Panc1 (cell line): ENCODE measurements at regions of chr12 and their contacts with region 1.

Region 1: DNA sequence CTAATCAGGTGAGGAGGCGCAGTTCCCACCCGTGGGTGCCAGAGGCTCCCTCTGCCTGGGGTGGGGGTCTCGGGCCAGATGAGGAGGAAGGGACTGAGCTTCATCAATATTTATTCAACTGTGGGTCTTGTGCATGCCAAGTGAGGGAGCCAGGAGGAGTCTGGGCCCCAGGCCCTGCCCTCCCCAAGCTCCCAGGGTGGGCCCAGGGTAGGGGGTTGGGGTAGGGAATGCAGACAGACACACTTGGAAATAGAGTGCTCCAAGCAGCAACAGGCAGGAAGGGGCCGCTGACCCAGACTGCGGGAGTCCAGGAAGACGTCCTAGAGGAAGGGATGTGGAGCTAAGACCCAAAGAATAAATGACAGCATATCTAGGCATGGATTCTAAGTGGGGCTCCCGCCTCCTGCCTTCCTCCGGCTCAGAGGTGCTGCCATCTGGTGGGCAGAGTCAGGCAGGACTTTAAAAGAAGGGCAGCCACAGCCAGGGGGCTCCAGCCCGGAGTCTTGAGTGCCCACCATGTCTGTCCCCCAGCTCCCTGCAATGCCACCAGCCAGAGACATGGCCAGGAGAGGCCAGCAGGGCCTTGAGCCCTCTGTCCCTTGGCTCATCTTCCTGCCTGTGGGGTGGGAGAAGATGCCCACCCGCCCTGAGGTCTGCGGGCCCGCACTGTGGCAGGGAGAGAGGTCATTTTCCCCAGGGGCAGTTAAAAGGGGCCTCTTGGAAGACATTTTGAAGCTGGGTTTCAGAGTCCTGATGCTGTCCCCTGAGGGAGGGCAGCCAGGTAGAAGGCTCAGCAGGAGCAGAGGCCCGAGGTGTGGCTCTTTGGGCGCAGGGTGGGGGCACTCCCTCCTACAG is 70.1 kb downstream of the PHETA1 start:
- DNase-seq: no peak
- ATAC-seq: peak; percentile 87
- H3K4me3 ChIP-seq: no peak overlapping the region
- H3K27ac ChIP-seq: no peak overlapping the region
- H3K4me1 ChIP-seq: no peaks in the 10 kb centered on the region
- H3K27me3 ChIP-seq: peaks cover 6% of the 10 kb centered on the region; the same call in 1 of the 2 replicates
- CTCF ChIP-seq: peak; percentile 95

Region 2: GRCh38 chr12:110813285-110813684 is 485.5 kb before region 1 on chr12:
- CTCF ChIA-PET with region 1: no interaction called
- POLR2A ChIA-PET with region 1: no interaction called
- in situ Hi-C with region 1: no loop called
- intact Hi-C with region 1: no loop called
- DNase-seq: no peak
- ATAC-seq: no peak
- H3K4me3 ChIP-seq: no peak overlapping the region
- H3K27ac ChIP-seq: no peak overlapping the region
- H3K4me1 ChIP-seq: no peaks in the 10 kb centered on the region
- H3K27me3 ChIP-seq: peaks cover 3% of the 10 kb centered on the region; the same call in 1 of the 2 replicates
- CTCF ChIP-seq: no peak

Region 3: DNA sequence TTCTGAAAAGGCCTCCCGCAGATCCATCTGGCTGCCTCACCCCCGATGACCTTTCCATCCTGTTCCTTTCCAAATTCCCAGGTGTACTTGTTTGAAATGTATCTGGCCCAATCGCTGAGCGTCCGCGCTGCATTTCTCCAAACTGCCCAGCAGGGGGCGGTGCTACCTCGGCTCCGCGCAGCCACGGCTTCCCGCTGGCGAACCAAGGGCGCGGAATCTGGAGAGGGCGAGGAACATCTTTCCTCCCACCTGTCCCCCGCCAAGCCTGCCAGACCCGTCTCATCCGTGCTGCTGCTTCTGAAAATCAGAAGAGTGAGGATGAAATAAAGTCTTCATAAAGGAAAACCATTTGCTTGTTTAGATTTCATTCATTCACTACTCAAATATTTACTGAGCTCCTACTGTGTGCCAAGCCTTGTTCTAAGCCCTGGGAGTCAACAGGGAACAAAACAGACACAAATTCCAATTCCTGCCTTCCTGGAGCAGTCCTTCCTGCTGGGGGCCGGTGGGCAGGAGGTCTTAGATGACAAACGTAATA is 361.6 kb before region 1 on chr12:
- CTCF ChIA-PET with region 1: interaction called, 5 read pairs
- POLR2A ChIA-PET with region 1: no interaction called
- in situ Hi-C with region 1: no loop called
- intact Hi-C with region 1: loop called (anchors 5 kb)
- DNase-seq: peak; percentile 36
- ATAC-seq: peak; percentile 80
- H3K4me3 ChIP-seq: no peak overlapping the region
- H3K27ac ChIP-seq: no peak overlapping the region
- H3K4me1 ChIP-seq: peaks cover 3% of the 10 kb centered on the region; the same call in 1 of the 2 replicates
- H3K27me3 ChIP-seq: no peaks in the 10 kb centered on the region; the same call in 1 of the 2 replicates
- CTCF ChIP-seq: peak; percentile 98

Region 4: GRCh38 chr12:111320233-111321050 is 21.6 kb after region 1 on chr12:
- CTCF ChIA-PET with region 1: no interaction called
- POLR2A ChIA-PET with region 1: no interaction called
- in situ Hi-C with region 1: no loop called
- intact Hi-C with region 1: no loop called
- DNase-seq: no peak
- ATAC-seq: no peak
- H3K4me3 ChIP-seq: no peak overlapping the region
- H3K27ac ChIP-seq: no peak overlapping the region
- H3K4me1 ChIP-seq: 0 out of 2 replicates have a peak, but pooled peaks cover 3% of the 10 kb centered on the region
- H3K27me3 ChIP-seq: no peaks in the 10 kb centered on the region
- CTCF ChIP-seq: no peak

Region 5: GRCh38 chr12:111330800-111331752 is 32.3 kb after region 1 on chr12:
- CTCF ChIA-PET with region 1: interaction called, 14 read pairs
- POLR2A ChIA-PET with region 1: no interaction called
- in situ Hi-C with region 1: no loop called
- intact Hi-C with region 1: no loop called
- DNase-seq: peak; percentile 22
- ATAC-seq: peak; percentile 86
- H3K4me3 ChIP-seq: no peak overlapping the region
- H3K27ac ChIP-seq: no peak overlapping the region
- H3K4me1 ChIP-seq: no peaks in the 10 kb centered on the region
- H3K27me3 ChIP-seq: no peaks in the 10 kb centered on the region
- CTCF ChIP-seq: peak; percentile 84

Region 6: GRCh38 chr12:111692575-111693210 is 393.9 kb after region 1 on chr12:
- CTCF ChIA-PET with region 1: no interaction called
- POLR2A ChIA-PET with region 1: no interaction called
- in situ Hi-C with region 1: no loop called
- intact Hi-C with region 1: no loop called
- DNase-seq: no peak
- ATAC-seq: peak; percentile 80
- H3K4me3 ChIP-seq: no peak overlapping the region
- H3K27ac ChIP-seq: no peak overlapping the region
- H3K4me1 ChIP-seq: no peaks in the 10 kb centered on the region
- H3K27me3 ChIP-seq: no peaks in the 10 kb centered on the region
- CTCF ChIP-seq: peak; percentile 63; the same call in 1 of the 2 replicates